ENCODE measurements at regions of chr18 and their contacts with region 1.

Region 1: DNA sequence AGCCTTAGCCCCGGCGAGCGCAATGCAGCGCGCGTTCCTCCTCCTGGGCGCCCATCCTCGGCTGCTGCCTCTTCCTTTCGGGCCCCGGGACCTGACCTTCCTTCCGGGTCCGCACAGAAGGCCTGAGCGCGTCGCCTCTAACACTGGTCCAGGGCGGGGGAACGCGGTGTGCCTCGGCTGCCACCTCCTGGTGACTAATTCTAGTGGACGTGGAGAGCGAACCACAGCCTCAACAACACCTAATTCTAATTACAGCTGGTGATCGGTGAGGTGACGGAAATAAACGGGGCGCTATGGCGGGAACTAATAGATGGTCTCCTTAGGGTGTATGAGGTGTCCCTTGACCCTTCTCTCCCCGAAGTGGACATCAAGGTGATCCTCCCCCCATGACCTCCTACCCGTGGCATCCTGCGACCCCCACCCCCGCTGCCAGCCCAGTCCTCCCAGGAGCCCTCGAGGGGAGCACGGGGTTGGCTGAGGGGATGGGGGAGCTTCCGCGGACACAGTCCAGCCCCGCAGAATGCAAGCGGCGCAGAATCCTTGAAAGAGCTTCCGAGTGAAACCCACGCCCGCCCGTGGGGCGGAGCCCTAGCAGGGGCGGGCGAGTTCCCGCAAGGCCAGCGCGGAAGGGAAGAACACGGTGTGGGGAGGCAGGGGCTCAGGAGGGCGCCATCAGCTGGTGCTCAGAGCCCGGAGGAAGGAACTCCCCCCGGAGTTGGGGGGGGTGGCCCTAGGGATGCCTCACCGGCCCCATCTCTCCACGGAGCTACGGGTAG is 12.8 kb upstream of the HMSD start:
- DNase-seq: peak; percentile 76 to 79
- ATAC-seq: peak; percentile 90 to 100 (median 98)
- H3K4me3 ChIP-seq: peak overlapping the region; percentile 1 to 60 (median 52)
- H3K27ac ChIP-seq: peak overlapping the region in 1 of 10 donors; percentile 1
- H3K4me1 ChIP-seq: peaks cover 0 to 14% (median 9%) of the 10 kb centered on the region in 9 donors
- H3K27me3 ChIP-seq: peaks cover 0 to 49% (median 36%) of the 10 kb centered on the region in 7 donors
- CTCF ChIP-seq: peak; percentile 48 to 78 (median 72)

Region 2: DNA sequence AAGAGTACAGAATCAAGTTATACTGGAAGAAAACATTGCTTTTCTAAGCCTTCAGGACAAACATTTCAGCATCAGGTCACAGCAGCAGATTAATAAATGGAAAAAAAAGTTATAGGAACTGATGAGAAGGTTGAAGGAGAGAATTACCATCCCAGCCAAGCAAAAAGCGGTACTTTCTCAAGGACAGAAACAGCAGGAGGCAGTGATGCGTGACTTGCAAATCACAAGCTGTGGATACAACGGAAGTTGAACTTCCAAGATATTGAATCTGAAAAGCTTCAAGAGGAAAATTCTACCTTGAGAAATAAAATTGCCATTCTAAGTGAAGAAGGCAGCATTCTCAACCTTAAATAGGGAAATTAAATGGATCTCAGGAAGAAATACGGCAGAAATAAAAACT is 412.7 kb before region 1 on chr18:
- intact Hi-C with region 1: loop called in 8 of 10 experiments (anchors 2 to 10 kb)
- DNase-seq: no peak
- ATAC-seq: no peak
- H3K4me3 ChIP-seq: no peak overlapping the region
- H3K27ac ChIP-seq: no peak overlapping the region
- H3K4me1 ChIP-seq: no peaks in the 10 kb centered on the region
- H3K27me3 ChIP-seq: peaks cover 0 to 28% (median 0%) of the 10 kb centered on the region in 7 donors
- CTCF ChIP-seq: no peak

Region 3: DNA sequence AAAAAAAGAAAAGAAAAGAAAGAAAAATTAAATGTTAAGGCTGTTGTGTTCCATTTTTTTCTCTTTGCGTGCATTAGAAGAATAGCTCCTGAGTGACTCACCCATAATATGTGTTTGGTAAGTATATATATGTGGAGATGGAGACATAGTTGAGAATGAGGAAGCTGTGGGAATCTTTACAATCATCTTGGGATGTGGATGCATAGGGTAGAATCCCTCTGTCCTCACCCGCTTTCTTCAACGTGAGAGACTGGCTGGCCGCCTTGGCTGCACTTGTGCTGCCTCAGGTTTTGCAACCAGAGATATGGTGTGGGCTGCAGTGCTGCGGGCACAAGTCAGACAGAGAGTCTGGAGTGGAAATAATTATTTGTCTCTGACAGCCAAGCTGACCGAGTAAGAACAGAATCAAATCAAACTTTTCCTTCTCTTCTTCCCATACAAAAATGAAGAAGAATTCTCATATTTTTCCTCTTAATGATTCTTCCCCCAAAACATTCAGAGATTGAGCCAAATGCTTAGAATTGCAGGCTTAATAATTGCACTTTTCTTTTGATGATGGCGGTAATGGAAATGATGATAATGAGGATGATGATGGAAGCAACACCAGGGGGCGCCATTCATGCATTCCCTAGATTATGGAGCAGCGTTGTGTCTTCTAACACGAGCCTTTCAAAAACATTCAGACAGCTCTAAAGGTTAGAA is 112.7 kb before region 1 on chr18:
- intact Hi-C with region 1: loop called in 4 of 10 experiments (anchors 2 to 10 kb)
- DNase-seq: peak; percentile 9 to 16
- ATAC-seq: no peak
- H3K4me3 ChIP-seq: no peak overlapping the region
- H3K27ac ChIP-seq: no peak overlapping the region
- H3K4me1 ChIP-seq: no peaks in the 10 kb centered on the region
- H3K27me3 ChIP-seq: peaks cover 0 to 10% (median 0%) of the 10 kb centered on the region in 7 donors
- CTCF ChIP-seq: peak; percentile 5 to 56 (median 44)

Region 4: DNA sequence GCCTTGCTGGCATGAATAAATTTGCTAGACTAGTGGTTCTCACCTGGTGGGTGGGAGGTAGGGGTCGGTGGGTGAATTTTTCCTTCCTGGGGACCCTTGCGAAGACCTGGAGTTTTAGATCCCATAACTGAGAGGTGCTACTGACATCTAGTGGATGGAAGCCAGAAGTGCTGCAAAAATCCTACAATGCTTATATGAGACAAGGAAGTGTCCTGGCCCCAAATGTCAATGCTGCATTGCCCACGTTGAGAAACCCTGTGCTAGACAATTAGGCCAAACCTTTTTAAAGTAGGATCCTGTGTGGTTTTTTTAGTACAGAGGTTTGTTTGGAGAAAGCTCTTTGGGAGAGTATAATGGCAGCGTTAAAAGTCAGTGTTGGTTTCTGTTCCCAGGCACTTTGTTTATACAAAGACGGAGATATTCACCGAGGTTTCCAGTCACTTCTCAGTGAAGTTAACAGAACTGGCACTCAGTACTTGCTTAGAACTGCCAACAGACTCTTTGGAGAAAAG is 43.1 kb after region 1 on chr18:
- intact Hi-C with region 1: no loop called
- DNase-seq: peak in 1 of 2 donors; percentile 50
- ATAC-seq: peak in 7 of 8 donors; percentile 74 to 85 (median 82)
- H3K4me3 ChIP-seq: peak overlapping the region in 6 of 10 donors; percentile 16 to 42 (median 32)
- H3K27ac ChIP-seq: peak overlapping the region in 4 of 10 donors; percentile 25 to 56 (median 44)
- H3K4me1 ChIP-seq: peaks cover 0 to 51% (median 4%) of the 10 kb centered on the region in 9 donors
- H3K27me3 ChIP-seq: no peaks in the 10 kb centered on the region
- CTCF ChIP-seq: peak; percentile 59 to 92 (median 87)